ENCODE measurements at regions of chr19 and their contacts with region 1.

Region 1: DNA sequence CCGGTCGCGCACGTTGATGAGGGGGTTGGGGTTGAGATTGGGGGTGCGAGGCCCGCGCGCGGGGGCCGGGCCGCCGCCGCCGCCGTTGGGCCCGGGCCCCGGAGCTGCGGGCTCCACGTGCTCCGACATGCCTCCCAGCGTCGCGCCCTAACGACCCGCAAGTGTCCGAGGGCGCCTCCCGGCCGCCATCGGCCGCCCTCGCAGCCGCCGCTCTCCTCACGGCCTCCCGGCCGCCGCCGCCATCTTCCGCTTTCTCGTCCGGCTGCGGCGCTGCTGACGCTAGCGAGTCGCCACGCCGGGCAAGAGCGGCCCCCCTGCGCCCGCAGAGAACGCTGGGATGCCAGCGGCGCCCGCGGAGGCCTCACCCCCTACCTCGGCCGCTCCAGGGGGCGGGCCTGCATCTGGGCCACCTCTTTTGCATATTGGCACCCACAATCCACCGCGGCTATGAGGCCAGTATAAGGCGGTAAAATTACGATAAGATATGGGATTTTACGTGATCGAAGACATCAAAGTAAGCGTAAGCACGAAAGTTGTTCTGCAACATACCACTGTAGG is at the start of gene TMEM259:
- DNase-seq: peak; percentile 98 to 99
- H3K4me3 ChIP-seq: peak within 1 kb of the TSS; percentile 86 to 92 (median 87)
- H3K27ac ChIP-seq: peak within 1 kb of the TSS; percentile 93 to 94 (median 94)
- H3K4me1 ChIP-seq: peaks cover 43 to 64% of the 10 kb centered on the region in 2 donors
- H3K27me3 ChIP-seq: no peaks in the 10 kb centered on the region
- CTCF ChIP-seq: no peak
- POLR2A ChIP-seq: peak in 1 of 2 donors; percentile 73
- total RNA-seq, gene TMEM259: 162 to 238 (median 192) TPM

Region 2: DNA sequence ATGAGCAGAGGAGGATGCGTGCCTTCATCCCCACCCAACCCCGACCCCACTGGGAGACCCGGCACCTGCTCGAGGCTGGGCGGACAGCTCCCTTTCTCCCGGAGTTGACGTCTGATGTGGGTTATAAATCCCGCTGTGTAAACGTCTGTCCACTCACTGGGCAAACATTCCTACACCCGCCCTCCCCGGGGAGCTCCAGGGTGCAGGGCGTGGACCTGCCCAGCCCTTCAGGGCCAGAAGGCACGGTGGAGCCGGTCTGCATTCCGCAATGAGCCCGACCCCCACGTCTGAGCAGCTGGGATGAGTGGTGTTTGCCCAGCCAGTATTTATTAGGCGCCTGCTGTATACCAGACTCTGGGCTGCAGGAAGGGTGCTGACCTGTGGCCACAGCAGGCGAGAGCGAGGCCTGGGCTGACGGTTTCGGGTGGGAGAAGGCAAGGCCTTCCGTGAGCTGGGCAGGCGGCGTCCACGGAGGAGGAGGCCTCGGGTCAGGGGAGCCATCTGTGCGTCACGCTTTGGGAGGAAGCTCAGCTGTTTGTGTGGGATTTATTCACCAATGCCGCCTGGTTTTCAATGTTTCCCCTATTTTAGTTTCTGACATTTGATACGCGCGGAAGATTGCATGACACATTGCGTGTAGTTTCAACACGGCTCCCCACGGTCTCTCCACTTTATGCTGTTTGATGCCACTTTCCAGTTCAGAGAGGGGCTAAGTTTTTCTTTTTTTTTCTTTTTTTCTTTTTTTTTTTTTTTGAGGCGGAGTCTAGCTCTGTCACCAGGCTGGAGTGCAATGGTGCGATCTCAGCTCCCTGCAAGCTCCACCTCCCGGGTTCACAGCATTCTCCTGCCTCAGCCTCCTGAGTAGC is 268.1 kb before region 1 on chr19:
- intact Hi-C with region 1: no loop called
- DNase-seq: no peak
- H3K4me3 ChIP-seq: no peak overlapping the region
- H3K27ac ChIP-seq: no peak overlapping the region
- H3K4me1 ChIP-seq: peaks cover 0 to 14% of the 10 kb centered on the region in 2 donors
- H3K27me3 ChIP-seq: no peaks in the 10 kb centered on the region
- CTCF ChIP-seq: no peak
- POLR2A ChIP-seq: no peak

Region 3: DNA sequence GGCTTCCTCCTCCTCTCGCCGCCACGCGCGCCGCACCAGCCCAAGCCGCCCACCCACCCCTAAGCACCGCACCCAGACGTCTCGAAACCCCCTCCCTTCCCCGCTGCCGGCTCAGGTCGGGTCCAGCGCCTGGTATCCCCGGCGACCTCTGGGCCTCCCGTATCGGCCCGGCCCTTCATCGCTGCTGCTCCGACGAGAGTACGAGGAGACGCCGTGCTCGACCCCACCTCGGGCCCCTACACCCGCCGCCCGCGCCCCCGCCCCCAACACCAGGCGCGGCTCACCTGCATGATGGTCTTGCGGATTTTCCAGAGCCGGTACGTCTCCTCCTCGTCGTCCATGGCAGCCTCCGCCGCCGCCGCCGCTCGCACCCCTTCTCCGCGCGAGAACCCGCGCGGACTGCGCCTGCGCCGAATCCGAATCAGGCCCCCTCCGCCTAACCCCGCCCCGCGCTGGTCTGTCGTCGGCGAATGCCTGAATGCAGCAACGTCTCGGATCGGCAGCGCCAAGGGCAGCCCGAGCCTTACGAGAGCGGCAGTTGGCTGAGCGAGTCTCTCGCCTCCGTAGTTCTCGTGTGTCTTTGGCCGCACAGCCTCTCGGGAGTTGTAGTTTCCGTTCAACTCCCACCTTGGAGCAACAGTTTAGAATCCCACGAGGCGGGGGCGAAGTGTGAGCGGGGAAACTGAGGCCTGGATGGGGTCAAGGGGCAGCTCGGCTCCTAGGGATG is 74.2 kb after region 1 on chr19 and contains the start of gene POLR2E:
- intact Hi-C with region 1: loop called (anchors 5 kb)
- DNase-seq: peak; percentile 99
- H3K4me3 ChIP-seq: peak within 1 kb of the TSS; percentile 63 to 95 (median 88)
- H3K27ac ChIP-seq: peak within 1 kb of the TSS in 2 of 3 donors; percentile 44 to 57
- H3K4me1 ChIP-seq: peaks cover 37 to 46% of the 10 kb centered on the region in 2 donors
- H3K27me3 ChIP-seq: no peaks in the 10 kb centered on the region
- CTCF ChIP-seq: no peak
- POLR2A ChIP-seq: peak in 1 of 2 donors; percentile 86
- total RNA-seq, gene POLR2E: 87.6 to 264 (median 163) TPM

Region 4: DNA sequence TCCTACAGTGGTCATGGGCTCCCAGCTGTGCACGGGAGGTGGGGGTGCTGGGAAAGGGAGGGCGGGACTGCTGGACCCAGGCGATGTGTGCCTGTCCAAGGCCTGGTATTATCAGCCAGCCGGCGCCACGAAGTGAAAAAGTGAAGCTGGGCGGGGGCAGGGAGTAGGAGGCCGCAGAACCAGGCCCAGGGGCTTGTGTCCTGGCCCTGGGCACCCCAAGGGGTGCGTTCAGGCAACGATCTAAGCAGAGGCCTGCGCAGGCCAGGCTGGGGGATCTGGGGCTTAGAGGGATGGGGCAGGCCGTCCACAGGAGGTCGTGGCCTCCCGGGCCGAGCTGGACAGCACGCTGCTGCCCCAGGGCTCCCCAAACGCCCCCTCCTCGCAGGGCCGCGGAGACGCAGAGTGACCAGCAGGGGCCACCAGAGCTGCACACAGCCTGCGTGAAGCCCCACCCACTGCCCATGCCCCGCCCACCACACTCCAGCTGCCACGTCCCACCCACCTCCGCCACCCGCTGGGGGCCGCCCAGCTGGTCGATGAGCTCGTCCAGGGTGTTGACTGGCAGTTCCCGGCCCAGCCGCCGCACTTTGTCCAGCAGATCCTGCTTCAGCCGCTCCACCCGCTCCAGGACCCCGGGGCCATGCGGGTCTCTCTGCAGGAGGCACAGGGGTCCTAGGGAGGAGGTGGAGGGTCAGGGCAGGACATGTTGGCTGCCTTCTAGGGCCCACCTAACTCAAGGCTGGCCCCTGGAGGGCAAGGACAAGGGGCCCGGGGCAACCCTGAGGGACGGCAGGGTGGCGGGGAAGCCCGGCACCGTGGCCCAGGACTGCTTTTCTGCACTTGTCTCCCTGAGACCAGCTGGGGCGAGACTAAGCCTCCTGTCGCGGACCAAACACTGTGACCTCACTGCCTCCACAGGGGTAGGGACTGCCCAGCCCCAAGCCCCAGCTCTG is 92.4 kb after region 1 on chr19:
- intact Hi-C with region 1: no loop called
- DNase-seq: peak; percentile 97
- H3K4me3 ChIP-seq: no peak overlapping the region
- H3K27ac ChIP-seq: peak overlapping the region; percentile 69 to 76 (median 73)
- H3K4me1 ChIP-seq: peaks cover 4 to 14% of the 10 kb centered on the region in 2 donors
- H3K27me3 ChIP-seq: no peaks in the 10 kb centered on the region
- CTCF ChIP-seq: peak; percentile 71 to 98 (median 90)
- POLR2A ChIP-seq: peak in 1 of 2 donors; percentile 41

Measured in thyroid gland (tissue), 4 donors.